AG04449 (cell line): ENCODE measurements at regions of chr2 and their contacts with region 1.

Region 1: DNA sequence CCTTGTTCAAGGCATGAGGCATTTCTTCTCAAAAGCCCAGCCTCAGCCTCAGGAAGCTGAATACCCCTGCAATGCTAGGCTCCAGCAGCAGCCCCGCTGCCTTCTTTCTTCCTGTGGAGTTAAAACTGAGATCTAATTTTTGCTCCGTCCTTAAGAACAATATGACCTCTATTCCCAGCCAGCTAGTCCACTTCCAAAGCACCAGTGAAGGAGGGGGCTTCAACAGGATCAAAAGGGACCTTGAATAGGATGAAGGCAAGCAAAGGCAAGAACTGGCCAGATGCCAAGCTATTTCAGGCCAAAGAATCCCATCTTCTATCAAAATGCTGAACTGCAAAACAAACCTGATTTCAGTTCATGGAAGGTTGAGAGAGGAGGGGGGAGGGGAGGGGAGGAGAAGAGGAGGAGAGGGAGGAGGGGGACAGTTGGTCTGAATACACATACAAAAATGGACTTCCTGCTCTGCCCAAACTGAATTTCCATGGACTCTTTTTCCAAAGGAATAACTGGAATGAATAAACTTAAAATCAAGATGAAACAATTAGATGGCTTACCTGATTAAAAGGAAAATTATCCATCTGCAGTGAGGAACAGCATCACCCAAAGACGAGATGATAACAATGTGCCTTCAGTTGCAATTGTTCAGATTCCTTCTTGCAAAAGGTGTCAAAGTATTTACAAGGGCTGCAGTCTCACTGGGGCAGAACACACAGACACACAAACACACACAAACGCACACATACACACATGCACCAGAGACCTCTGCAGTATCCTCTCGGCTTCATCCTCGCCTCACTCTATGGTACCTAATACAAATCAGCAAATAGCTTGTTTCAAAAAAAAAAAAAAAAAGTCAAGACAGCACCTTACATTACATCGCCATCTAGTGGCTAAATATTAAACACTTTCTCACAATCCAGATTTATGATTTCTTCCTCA is at the start of gene SCN1A:
- DNase-seq: no peak
- H3K4me3 ChIP-seq: no peak within 1 kb of the TSS
- CTCF ChIP-seq: peak; percentile 39

Region 2: GRCh38 chr2:165401285-165401852 is 726.1 kb before region 1 on chr2:
- CTCF ChIA-PET with region 1: interaction called, 10 read pairs
- POLR2A ChIA-PET with region 1: no interaction called
- DNase-seq: peak; percentile 29
- H3K4me3 ChIP-seq: no peak overlapping the region
- CTCF ChIP-seq: peak; percentile 56

Region 3: DNA sequence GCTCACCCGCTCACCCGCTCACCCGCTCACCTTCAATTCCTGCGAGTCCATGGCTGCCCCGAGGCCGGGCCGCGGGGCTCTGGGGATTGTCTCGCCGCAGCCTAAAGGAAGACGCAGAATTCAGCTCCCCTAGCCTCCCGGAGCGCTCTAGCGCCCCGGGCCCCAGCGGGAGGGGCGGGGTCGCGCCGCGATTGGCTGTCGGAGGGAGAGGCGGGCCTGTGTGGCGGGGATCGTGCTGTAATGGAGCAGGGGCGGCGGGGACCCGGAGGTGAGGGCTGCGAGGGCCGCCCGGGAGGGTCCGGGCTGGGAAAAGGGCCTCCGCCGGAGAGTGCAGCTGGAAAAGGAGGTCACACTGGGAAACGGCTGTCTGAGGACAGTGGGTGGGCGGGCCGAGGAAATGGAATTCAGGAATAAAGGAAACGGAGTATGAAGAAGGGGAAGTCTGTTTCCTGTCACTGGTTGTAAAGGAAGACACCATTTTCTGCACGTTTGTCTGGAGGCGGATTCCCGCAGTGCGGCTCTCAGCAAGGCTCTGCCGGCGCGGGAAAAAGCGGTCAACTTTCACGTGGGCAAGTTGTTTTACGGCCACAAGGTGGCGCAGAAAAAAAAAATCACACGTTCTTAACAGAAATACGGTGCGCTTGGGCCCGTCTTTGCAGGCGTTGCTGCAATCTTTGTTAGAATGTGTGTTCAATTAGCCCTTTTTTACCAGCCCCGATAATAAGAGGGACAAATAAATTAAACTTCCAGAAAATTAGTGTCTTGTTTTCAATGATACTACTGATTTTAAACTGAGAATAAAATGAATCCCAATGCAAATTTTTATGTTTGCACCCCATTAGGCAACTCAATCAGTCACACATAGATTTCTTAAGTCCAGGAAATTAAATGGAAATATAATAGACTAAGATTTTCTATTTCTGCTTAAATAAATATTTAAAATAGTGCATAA is 173.6 kb before region 1 on chr2 and contains the start of gene TTC21B:
- CTCF ChIA-PET with region 1: interaction called, 53 read pairs
- POLR2A ChIA-PET with region 1: no interaction called
- DNase-seq: peak; percentile 69
- H3K4me3 ChIP-seq: peak within 1 kb of the TSS; percentile 73
- CTCF ChIP-seq: peak; percentile 63

Region 4: DNA sequence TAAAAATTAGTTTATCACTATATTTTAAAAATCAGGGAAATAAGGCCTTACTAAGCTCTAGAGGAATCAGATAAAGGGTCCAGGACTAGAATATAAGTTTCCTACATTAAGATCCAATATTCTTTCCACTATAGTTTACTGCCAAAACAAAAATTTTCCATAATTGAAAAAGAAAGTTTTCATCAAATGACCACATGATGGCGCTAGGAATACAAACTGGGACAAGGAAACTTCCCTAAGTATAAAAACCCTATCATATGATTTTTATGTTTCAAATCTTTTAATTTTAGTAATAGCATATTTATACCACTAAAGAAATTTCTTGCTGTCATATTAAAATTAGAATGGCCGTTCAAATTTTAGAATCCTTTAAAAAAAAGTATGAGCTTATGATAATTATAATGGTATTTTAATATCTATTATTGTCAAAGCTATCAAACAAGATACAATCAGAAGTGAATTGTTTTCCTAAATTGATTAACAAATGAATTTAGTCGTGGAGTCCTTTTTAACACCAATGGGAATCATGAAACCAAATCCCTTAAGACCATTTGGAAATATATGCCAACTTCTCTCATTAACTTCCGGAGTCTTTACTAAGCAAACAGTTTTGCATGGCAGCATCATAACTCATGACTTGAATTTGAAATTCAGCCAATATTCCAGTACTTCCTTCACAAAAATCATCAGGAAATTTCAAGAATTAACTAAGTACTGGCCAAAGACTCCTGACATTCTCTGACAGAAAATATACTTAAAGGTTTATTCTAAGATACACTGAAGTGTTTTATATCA is 69.9 kb before region 1 on chr2:
- CTCF ChIA-PET with region 1: interaction called, 97 read pairs
- POLR2A ChIA-PET with region 1: no interaction called
- DNase-seq: no peak
- H3K4me3 ChIP-seq: no peak overlapping the region
- CTCF ChIP-seq: peak; percentile 22

Region 5: DNA sequence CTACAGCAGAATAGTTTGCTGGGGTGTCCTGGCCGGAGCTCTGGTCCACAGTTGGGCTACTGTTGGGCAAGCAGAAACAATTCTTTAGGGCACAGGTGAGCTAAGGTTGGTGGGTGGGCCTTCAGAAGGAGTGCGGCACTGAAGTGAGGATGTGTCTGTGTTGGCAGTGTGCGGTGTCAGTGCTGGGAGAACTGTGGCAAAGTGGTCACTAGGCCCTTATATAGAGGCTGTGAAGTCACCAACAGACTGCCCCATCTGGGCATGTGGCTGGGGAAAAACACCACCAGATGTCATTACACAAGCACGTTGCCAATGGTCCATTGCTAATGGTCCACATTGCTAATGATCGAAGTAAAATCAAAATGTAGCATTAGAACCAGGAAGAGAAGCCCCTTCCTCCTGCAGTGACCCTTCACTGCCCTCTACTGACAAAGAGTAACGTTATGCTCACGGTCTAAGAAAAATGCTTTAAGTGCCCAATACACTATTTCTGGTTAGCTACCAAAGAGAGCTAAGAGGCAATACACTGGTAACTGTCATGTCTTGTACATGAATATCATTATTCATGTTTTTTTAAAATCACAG is 21.0 kb before region 1 on chr2:
- CTCF ChIA-PET with region 1: interaction called, 15 read pairs
- POLR2A ChIA-PET with region 1: no interaction called
- DNase-seq: no peak
- H3K4me3 ChIP-seq: no peak overlapping the region
- CTCF ChIP-seq: no peak